ENCODE measurements at regions of chr15 and their contacts with region 1.

Region 1: DNA sequence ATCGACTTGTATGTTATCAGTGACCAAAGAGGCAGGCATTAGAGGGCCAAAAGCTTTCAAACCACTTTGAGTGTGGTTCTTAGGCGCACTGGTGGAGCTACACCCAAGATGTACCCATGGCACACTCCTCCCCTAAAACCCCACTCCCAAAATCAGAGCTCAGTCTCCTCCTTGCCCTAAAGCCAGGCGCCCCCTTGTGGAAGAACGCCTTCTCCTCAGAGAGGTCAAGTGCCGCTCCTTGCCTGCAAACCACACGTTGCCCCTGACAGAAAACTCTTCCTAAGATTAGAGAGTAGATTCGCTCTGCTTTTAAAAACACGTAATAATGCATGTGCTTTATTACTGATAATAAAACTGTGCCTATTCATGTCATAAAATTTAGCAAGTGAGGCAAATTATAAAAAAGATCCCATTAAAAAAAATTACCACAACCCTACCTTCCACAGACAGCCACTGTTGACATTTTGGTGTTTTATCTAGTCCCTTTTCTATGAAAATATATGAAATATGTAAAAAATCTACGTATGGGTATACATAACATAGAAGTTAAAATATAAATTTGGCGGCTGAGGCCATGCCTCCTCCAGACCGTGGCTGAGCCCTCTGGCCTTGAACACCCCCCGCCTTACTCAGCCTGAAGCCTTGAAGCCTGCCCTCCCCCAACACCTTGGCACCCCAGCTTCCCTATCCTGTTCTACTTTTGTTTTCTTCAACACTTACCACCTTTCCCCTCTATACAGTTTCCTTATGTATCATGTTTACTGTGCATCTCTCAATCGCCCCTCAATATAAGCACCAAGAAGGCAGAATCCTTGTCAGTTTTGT is 33.5 kb downstream of the BCL2L10 start:
- DNase-seq: no peak
- H3K4me3 ChIP-seq: no peak overlapping the region
- H3K27ac ChIP-seq: peak overlapping the region; percentile 94
- H3K4me1 ChIP-seq: peaks cover 49% of the 10 kb centered on the region
- H3K27me3 ChIP-seq: no peaks in the 10 kb centered on the region
- CTCF ChIP-seq: peak; percentile 66 to 79

Region 2: DNA sequence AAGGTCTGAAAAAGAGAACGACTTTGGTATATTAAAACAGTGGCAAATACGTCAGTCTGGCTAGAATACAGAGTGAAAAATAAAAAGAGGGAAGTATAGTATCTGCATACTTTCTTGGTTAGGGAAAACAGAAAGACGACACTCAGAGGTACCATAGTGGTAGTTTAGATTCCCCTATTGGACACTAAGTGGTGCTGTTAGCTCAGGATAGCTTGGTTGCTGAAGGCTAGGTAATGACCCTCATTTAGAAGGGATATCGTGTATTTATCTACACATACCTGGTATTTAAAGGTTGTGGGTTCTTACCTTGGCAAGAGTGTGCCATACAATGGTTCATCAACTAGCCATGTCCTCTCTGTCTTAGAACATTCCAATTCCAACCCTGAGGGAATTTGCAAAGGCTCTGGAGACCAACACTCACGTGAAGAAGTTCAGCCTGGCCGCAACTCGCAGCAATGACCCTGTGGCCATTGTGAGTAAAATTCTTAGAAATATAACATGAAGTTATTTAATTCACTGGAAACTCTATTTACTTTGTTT is 296.7 kb before region 1 on chr15:
- CTCF ChIA-PET with region 1: no interaction called
- dilution Hi-C with region 1: no loop called
- in situ Hi-C with region 1: no loop called
- intact Hi-C with region 1: loop called (anchors 5 kb)
- DNase-seq: no peak
- H3K4me3 ChIP-seq: no peak overlapping the region
- H3K27ac ChIP-seq: no peak overlapping the region
- H3K4me1 ChIP-seq: peaks cover 10% of the 10 kb centered on the region
- H3K27me3 ChIP-seq: no peaks in the 10 kb centered on the region
- CTCF ChIP-seq: peak; percentile 50 to 60

Region 3: GRCh38 chr15:52093539-52094502 is 14.7 kb after region 1 on chr15:
- CTCF ChIA-PET with region 1: interaction called, 4 read pairs
- dilution Hi-C with region 1: no loop called
- in situ Hi-C with region 1: no loop called
- intact Hi-C with region 1: loop called (anchors 1 kb)
- DNase-seq: peak; percentile 98
- H3K4me3 ChIP-seq: no peak overlapping the region
- H3K27ac ChIP-seq: peak overlapping the region; percentile 93
- H3K4me1 ChIP-seq: peaks cover 32% of the 10 kb centered on the region
- H3K27me3 ChIP-seq: no peaks in the 10 kb centered on the region
- CTCF ChIP-seq: no peak

Region 4: GRCh38 chr15:52139599-52140491 is 60.8 kb after region 1 on chr15:
- CTCF ChIA-PET with region 1: interaction called, 3 read pairs
- dilution Hi-C with region 1: no loop called
- in situ Hi-C with region 1: no loop called
- intact Hi-C with region 1: loop called (anchors 1 kb)
- DNase-seq: peak; percentile 50
- H3K4me3 ChIP-seq: no peak overlapping the region
- H3K27ac ChIP-seq: no peak overlapping the region
- H3K4me1 ChIP-seq: peaks cover 4% of the 10 kb centered on the region
- H3K27me3 ChIP-seq: no peaks in the 10 kb centered on the region
- CTCF ChIP-seq: peak; percentile 90 to 93

Region 5: GRCh38 chr15:52186651-52187486 is 107.8 kb after region 1 on chr15:
- CTCF ChIA-PET with region 1: no interaction called
- dilution Hi-C with region 1: no loop called
- in situ Hi-C with region 1: no loop called
- intact Hi-C with region 1: no loop called
- DNase-seq: no peak
- H3K4me3 ChIP-seq: no peak overlapping the region
- H3K27ac ChIP-seq: no peak overlapping the region
- H3K4me1 ChIP-seq: no peaks in the 10 kb centered on the region
- H3K27me3 ChIP-seq: no peaks in the 10 kb centered on the region
- CTCF ChIP-seq: no peak

Region 6: DNA sequence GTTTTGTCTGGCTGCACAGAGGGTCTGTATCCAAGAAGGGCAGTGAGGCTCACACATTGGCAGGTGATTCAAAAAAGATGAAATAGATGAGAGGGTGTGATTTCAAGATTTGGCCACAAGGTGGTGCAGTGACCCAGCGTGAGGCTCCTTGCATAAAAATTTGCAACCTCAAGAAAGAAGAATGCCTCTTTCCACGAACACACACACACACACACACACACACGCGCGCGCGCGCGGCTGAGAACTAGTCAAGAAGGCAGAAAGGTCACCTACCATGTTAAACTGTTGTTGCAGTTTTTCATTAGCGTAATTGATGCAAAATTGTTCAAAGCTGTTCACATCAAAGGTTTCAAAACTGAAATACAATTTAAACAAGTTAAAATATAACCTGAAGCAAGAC is 177.3 kb after region 1 on chr15:
- CTCF ChIA-PET with region 1: no interaction called
- dilution Hi-C with region 1: no loop called
- in situ Hi-C with region 1: no loop called
- intact Hi-C with region 1: no loop called
- DNase-seq: peak; percentile 65
- H3K4me3 ChIP-seq: no peak overlapping the region
- H3K27ac ChIP-seq: no peak overlapping the region
- H3K4me1 ChIP-seq: peaks cover 32% of the 10 kb centered on the region
- H3K27me3 ChIP-seq: no peaks in the 10 kb centered on the region
- CTCF ChIP-seq: peak; percentile 74 to 76